ENCODE measurements at regions of chr17 and their contacts with region 1.

Region 1: DNA sequence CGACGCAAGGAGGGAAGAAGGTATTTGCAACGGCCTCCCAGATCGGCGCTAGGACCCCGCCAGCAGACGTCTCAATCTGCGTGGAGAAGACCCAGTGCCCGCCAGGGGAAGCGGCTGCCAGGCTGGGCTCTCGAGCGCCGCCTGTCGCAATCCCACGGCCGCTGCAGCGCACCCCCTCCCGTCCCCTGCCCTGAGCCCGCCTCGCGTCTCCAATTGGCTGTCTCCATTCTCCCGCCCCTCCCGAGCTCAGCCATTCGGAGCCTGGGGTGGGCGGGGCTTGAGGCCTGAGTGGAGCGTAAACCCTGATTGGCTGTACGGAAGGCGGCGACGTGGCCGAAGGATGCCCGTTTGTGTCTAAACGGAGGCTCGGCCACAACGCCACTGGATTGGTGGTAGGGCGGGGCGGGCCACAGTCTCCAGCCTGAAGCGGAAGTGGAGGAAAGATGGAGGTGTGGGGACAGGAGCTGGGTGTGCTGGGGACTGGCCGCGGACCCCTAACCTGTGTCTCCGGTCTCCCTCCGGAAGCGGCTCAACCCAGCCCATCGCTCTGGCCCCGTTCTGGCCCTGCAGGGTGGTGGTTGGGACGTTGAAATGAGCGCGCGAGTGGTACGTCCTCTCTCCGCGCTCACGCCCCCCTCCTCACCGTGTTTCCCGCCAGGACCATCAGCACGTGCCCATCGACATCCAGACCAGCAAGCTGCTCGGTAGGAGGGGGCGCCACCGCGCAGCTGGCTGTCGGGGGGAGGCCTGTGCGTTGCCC is at the start of gene CDK5RAP3:
- DNase-seq: peak; percentile 100
- H3K4me3 ChIP-seq: peak within 1 kb of the TSS; percentile 72
- H3K4me3 Mint-ChIP-seq: peak within 1 kb of the TSS; percentile 94
- H3K27ac Mint-ChIP-seq: peak within 1 kb of the TSS; percentile 92
- H3K4me1 ChIP-seq: peaks cover 40% of the 10 kb centered on the region
- H3K4me1 Mint-ChIP-seq: peaks cover 30% of the 10 kb centered on the region
- H3K27me3 ChIP-seq: no peaks in the 10 kb centered on the region
- H3K27me3 Mint-ChIP-seq: no peaks in the 10 kb centered on the region
- CTCF ChIP-seq: peak; percentile 99 to 100
- total RNA-seq, gene CDK5RAP3: 425 and 427 TPM in 2 replicates

Region 2: DNA sequence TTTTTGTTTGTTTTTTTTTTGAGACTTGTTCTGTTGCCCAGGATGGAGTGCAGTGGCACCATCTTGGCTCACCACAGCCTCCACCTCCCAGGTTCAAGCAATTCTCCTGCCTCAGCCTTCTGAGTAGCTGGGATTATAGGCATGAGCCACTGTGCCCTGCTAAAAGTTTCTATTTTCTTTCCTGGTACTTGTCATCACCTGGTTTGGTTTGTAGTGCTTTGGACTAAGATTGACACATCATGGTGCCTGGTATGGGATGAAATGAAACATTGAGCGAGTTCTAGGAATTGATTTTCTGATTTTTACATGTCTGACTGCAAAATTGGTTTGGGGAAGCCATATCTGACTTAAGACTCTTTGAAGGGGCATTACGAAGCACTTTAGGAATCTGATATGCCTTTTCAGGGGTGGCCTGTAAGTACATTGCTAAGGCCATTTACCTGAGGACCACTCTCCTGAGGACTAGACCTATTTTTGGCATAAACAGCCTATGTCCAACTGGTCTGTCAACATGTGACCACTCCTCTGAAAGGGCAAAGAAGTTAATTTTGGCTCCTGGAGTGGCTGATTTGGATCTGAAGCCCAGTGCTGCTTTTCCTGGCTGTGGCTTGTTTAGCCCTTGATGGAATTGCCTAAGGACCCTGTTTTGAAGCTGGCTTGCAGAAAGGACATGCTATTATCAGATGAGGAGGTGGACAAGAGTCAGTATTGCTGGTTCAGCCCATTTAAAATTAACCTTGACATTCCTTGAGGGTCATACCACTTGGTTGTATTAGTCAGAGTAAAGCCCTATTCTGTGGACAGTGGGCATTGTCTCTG is 295.3 kb before region 1 on chr17:
- CTCF ChIA-PET with region 1: no interaction called
- POLR2A ChIA-PET with region 1: no interaction called
- intact Hi-C with region 1: no loop called
- DNase-seq: no peak
- H3K4me3 ChIP-seq: no peak overlapping the region
- H3K4me3 Mint-ChIP-seq: no peak overlapping the region
- H3K27ac Mint-ChIP-seq: no peak overlapping the region
- H3K4me1 ChIP-seq: no peaks in the 10 kb centered on the region; the same call in 1 of the 2 replicates
- H3K4me1 Mint-ChIP-seq: no peaks in the 10 kb centered on the region
- H3K27me3 ChIP-seq: no peaks in the 10 kb centered on the region
- H3K27me3 Mint-ChIP-seq: no peaks in the 10 kb centered on the region
- CTCF ChIP-seq: no peak

Region 3: DNA sequence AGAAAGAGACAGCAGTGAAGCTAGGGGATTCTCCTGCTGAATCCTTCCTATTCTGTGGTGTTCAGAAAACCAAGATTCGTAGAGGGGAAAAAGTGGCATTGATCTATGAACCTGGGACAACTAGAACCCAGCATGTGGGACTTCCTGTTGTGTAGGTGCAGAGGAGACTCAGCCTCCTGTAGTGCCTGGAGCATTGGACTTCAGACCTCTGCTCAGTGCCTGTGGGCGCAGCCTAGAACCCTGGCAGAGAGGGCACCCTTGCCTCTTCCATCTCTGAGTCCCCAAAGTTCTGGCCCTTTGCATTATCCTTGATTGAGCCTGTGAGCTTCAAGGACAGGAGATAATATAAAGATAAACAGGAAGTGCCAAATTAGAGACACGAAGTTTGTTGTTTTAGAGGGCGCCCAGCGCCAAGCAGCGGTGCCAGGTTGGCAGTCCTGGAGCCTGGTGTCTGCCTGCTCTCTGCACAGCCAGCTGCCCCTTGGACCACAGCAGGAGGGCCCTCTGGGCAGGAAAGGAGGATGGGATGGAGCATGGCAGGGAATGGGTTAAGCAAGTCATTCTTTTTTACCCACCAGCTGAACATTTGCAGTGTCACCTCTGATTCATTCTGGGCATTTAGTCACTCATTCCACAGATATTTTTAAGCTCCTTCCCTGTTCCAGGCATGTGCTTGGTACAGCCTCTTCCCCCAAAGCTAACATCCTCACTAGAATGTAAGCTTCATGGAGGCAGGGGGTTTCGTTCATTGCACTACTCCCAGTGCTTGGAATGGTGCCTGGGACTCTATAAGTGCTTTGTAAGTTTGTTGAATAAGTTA is 108.1 kb before region 1 on chr17:
- CTCF ChIA-PET with region 1: no interaction called
- POLR2A ChIA-PET with region 1: no interaction called
- intact Hi-C with region 1: no loop called
- DNase-seq: no peak
- H3K4me3 ChIP-seq: no peak overlapping the region
- H3K4me3 Mint-ChIP-seq: no peak overlapping the region
- H3K27ac Mint-ChIP-seq: peak overlapping the region; percentile 2
- H3K4me1 ChIP-seq: peaks cover 26% of the 10 kb centered on the region
- H3K4me1 Mint-ChIP-seq: peaks cover 16% of the 10 kb centered on the region
- H3K27me3 ChIP-seq: no peaks in the 10 kb centered on the region
- H3K27me3 Mint-ChIP-seq: no peaks in the 10 kb centered on the region
- CTCF ChIP-seq: no peak

Region 4: DNA sequence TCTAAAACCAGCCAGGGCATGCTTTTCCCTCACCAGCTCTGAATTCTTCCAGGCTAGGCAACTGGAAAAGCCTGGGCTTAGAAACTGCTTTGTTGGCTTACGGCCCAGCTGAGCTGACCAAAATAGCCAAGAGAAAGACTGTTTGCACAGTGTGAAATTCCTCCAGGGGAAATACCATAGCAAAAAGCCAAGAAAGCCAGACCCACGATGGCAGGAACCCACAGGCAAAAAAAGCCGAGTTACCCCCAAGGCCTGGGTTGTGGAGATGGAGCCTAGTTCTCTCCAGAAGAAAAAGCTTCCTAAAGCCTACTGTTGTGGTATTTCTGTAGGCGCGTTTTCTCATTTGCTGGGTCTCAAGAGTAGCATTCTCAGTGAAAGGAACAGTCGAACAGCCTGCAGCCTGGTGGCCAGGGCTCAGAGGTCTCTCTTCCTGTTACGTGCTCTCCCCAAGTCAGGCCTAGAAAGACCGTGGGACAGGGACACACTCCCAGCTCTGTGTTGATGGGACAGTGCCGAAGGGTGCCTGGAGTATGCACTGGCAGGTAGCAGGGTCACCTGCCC is 65.6 kb before region 1 on chr17:
- CTCF ChIA-PET with region 1: interaction called, 14 read pairs
- POLR2A ChIA-PET with region 1: interaction called, 4 read pairs
- intact Hi-C with region 1: no loop called
- DNase-seq: no peak
- H3K4me3 ChIP-seq: no peak overlapping the region
- H3K4me3 Mint-ChIP-seq: no peak overlapping the region
- H3K27ac Mint-ChIP-seq: no peak overlapping the region
- H3K4me1 ChIP-seq: no peaks in the 10 kb centered on the region
- H3K4me1 Mint-ChIP-seq: no peaks in the 10 kb centered on the region
- H3K27me3 ChIP-seq: no peaks in the 10 kb centered on the region
- H3K27me3 Mint-ChIP-seq: no peaks in the 10 kb centered on the region
- CTCF ChIP-seq: no peak

Region 5: DNA sequence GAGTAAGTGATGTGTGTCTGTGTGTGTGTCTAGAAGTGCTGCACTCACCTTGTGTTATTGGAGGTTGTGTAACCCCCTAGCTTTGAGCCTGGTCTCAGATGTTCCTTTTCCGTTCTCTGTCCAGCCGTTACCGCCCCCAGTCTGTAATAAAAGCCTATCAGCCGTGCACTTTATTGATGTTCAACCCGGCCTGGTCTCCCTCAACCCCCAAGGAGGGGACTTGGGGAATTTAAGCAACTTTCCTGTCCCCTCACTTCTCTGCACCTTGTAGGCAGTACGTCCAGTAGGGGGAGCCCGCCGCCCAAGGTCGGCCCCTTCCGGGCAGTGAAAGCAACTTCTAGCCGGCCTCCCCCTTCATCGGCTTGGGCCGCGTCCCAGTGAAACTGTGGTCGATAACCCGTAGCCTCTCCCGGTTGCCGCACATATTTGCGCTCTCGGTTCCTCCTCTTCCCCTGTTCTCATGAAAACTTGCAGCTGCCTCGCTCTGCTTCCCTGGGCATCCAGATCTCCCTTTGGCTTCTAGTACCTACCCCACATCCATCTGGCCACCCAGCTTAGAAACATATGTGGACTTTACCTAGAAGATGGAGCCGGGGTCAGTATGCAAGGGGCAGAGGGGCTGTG is 21.6 kb before region 1 on chr17:
- CTCF ChIA-PET with region 1: interaction called, 219 read pairs
- POLR2A ChIA-PET with region 1: interaction called, 62 read pairs
- intact Hi-C with region 1: loop called (anchors 1 kb)
- DNase-seq: peak; percentile 96 to 99
- H3K4me3 ChIP-seq: peak overlapping the region; percentile 1; the same call in 1 of the 2 replicates
- H3K4me3 Mint-ChIP-seq: peak overlapping the region; percentile 55
- H3K27ac Mint-ChIP-seq: peak overlapping the region; percentile 58
- H3K4me1 ChIP-seq: peaks cover 14% of the 10 kb centered on the region
- H3K4me1 Mint-ChIP-seq: peaks cover 28% of the 10 kb centered on the region
- H3K27me3 ChIP-seq: no peaks in the 10 kb centered on the region
- H3K27me3 Mint-ChIP-seq: no peaks in the 10 kb centered on the region
- CTCF ChIP-seq: peak; percentile 100

Region 6: GRCh38 chr17:47987240-47987835 is 16.5 kb after region 1 on chr17:
- CTCF ChIA-PET with region 1: interaction called, 19 read pairs
- POLR2A ChIA-PET with region 1: interaction called, 5 read pairs
- intact Hi-C with region 1: no loop called
- DNase-seq: no peak
- H3K4me3 ChIP-seq: no peak overlapping the region
- H3K4me3 Mint-ChIP-seq: no peak overlapping the region
- H3K27ac Mint-ChIP-seq: no peak overlapping the region
- H3K4me1 ChIP-seq: no peaks in the 10 kb centered on the region
- H3K4me1 Mint-ChIP-seq: peaks cover 7% of the 10 kb centered on the region
- H3K27me3 ChIP-seq: no peaks in the 10 kb centered on the region
- H3K27me3 Mint-ChIP-seq: no peaks in the 10 kb centered on the region
- CTCF ChIP-seq: peak in 1 of 2 experiments; percentile 8

Region 7: GRCh38 chr17:48011405-48012150 is 40.7 kb after region 1 on chr17:
- CTCF ChIA-PET with region 1: interaction called, 32 read pairs
- POLR2A ChIA-PET with region 1: interaction called, 4 read pairs
- intact Hi-C with region 1: loop called (anchors 1 kb)
- DNase-seq: peak; percentile 83
- H3K4me3 ChIP-seq: peak overlapping the region; percentile 48
- H3K4me3 Mint-ChIP-seq: peak overlapping the region; percentile 70
- H3K27ac Mint-ChIP-seq: no peak overlapping the region
- H3K4me1 ChIP-seq: peaks cover 5% of the 10 kb centered on the region
- H3K4me1 Mint-ChIP-seq: peaks cover 6% of the 10 kb centered on the region
- H3K27me3 ChIP-seq: no peaks in the 10 kb centered on the region
- H3K27me3 Mint-ChIP-seq: peaks cover 4% of the 10 kb centered on the region
- CTCF ChIP-seq: peak; percentile 95 to 97